Gastrocnemius medialis (tissue), 4 donors: ENCODE measurements at regions of chr4 and their contacts with region 1.

Region 1: DNA sequence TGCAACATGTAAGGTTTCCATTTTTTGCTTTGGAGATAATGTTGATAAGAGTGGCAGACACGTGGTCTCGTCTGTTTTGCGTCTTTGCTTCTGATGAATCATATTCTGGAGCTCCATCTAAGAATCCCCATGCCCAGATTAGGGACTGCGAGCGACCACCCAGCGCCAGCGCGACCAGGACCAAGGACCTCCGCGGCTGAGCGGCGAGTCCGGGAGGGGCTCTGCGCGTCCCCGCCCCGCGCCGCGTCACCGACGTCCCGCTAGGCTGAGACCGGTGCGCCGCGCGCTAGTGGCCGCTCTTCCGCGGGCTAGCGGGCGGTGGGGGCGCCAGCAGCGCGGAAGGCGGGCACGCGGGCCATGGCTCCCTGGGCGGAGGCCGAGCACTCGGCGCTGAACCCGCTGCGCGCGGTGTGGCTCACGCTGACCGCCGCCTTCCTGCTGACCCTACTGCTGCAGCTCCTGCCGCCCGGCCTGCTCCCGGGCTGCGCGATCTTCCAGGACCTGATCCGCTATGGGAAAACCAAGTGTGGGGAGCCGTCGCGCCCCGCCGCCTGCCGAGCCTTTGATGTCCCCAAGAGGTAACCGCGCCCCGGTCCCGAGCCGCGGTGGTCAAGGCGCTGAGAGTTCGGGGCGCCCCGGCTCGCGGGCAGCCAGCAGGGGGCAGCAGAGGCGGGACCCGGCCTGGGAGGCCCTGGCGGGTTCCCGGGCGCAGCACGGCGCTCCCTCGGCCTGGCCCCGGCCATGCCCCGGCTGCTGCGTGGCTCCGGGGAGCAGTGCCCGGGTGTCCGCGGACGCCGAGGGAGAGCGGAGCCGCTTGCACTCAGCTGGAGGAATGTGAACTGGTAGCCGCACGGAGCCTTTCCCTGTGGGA is at the start of gene SRD5A3:
- DNase-seq: peak; percentile 61 to 74
- ATAC-seq: peak; percentile 95 to 97
- H3K4me3 ChIP-seq: peak within 1 kb of the TSS; percentile 68 to 99 (median 82)
- H3K27ac ChIP-seq: peak within 1 kb of the TSS; percentile 89 to 99 (median 95)
- H3K4me1 ChIP-seq: peaks cover 0 to 20% of the 10 kb centered on the region in 2 donors
- H3K27me3 ChIP-seq: no peaks in the 10 kb centered on the region
- CTCF ChIP-seq: peak; percentile 88 to 99 (median 97)
- POLR2A ChIP-seq: peak; percentile 47 to 68
- total RNA-seq, gene SRD5A3: 2.4 to 7.6 (median 5.1) TPM

Region 2: DNA sequence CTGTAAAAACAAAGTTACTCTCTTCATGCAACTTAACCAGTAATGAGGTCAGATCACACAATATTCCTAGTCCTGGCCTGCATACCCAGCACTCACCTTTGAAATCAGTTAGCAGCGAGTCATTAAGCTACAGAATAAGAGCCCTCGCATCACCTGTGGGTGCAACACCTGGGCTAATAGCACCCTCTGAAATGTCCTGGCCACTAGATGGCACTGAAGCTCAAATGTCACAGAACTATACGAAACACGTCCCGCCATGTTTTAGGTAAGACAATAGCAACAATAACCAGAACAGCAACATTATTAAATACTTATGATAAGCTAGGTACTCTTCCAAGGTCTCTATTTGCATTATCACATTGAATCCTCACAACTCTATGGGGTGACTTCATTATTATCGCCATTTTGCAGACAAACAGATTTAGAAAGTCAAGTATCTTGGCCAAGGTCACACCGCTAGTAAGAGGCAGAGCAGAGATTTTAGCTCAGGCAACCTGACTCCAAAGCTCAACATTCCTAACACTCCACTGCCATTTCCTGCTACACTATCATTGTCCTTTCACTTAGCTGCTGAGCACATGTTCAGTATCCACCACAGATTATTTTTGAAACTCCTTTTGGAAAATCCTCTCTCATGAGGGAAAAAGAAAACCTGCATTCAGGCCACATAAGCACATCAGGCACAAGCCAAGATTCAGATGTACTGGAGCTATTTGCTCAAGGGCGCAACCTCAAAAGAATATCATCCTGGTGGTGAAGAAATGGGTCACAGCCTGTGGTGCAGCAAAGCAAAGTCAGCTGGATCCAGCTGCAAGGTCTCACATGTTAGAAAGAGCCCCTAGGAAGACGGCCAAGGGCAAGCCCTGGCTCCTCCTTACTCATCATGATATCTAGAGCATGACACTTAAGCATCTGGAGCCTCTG is 161.4 kb before region 1 on chr4:
- in situ Hi-C with region 1: no loop called
- intact Hi-C with region 1: no loop called
- DNase-seq: no peak
- ATAC-seq: no peak
- H3K4me3 ChIP-seq: no peak overlapping the region
- H3K27ac ChIP-seq: no peak overlapping the region
- H3K4me1 ChIP-seq: peaks cover 0 to 9% of the 10 kb centered on the region in 2 donors
- H3K27me3 ChIP-seq: no peaks in the 10 kb centered on the region
- CTCF ChIP-seq: no peak
- POLR2A ChIP-seq: no peak

Region 3: DNA sequence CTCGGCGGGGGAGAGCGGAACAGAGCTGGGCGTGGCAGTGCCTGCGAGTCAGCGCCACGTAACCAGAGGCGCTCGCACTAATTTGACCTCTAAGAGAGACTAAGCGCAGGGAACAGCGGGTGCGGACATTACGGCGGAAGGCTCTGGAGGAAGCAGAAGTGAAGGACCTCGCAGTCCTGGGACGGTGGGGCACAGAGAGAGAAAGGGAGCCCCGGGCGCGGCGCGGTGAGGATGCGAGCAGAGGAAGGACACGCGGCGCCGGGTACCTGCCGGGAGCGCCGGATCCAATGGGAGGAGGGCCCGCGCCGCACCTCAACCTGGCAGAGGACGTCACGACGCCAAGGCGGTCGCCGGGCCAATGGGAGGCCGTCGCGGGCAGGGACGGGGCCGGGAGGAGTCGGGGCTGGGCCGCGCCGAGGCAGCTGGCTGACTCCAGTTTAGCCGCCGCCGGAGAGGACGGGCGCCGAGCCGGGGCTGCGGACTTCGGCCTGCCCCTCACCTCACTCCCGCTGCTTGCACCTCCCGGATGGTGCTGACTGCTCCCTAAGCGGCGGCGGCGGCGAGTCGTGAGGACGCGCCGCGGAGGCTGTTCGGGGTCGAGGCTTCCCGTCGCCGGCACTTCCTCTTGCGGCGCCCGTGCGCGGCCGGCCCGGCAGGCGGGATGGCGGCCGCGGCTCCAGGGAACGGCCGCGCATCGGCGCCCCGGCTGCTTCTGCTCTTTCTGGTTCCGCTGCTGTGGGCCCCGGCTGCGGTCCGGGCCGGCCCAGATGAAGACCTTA is 49.5 kb after region 1 on chr4 and contains the start of gene TMEM165:
- in situ Hi-C with region 1: loop called in 1 of 4 experiments (anchors 10 kb)
- intact Hi-C with region 1: loop called (anchors 1 kb)
- DNase-seq: peak; percentile 88
- ATAC-seq: peak; percentile 89 to 90
- H3K4me3 ChIP-seq: peak within 1 kb of the TSS; percentile 72 to 95 (median 77)
- H3K27ac ChIP-seq: peak within 1 kb of the TSS; percentile 83 to 96 (median 91)
- H3K4me1 ChIP-seq: peaks cover 32 to 38% of the 10 kb centered on the region in 2 donors
- H3K27me3 ChIP-seq: no peaks in the 10 kb centered on the region
- CTCF ChIP-seq: peak in 1 of 5 experiments; percentile 15
- POLR2A ChIP-seq: peak; percentile 92 to 93
- total RNA-seq, gene TMEM165: 23.5 to 80.3 (median 48.9) TPM

Region 4: DNA sequence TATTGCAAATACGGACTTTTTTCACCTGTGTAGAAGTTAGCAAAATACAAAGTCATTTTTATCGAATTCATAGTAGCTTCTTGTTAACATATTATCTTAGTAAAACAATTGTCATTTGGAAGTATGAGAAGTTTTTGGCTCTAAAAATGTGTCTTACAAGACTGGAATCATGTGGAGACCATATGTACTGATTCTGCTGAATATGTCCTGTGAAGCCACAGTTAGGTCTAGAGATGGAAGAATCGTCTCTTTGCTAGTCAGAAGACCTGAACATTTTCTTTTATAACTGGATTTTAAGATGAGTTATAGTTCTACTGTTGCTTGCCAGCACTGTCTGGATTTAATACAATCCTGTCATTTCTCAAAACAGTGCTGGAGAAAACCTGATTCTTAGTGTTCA is 78.6 kb after region 1 on chr4:
- in situ Hi-C with region 1: no loop called
- intact Hi-C with region 1: loop called (anchors 5 kb)
- DNase-seq: no peak
- ATAC-seq: no peak
- H3K4me3 ChIP-seq: no peak overlapping the region
- H3K27ac ChIP-seq: no peak overlapping the region
- H3K4me1 ChIP-seq: no peaks in the 10 kb centered on the region
- H3K27me3 ChIP-seq: no peaks in the 10 kb centered on the region
- CTCF ChIP-seq: no peak
- POLR2A ChIP-seq: no peak

Region 5: GRCh38 chr4:55546756-55547465 is 200.7 kb after region 1 on chr4 and contains the start of gene CLOCK:
- in situ Hi-C with region 1: loop called in 1 of 4 experiments (anchors 10 kb)
- intact Hi-C with region 1: loop called (anchors 1 kb)
- DNase-seq: peak; percentile 75 to 82
- ATAC-seq: peak; percentile 86 to 87
- H3K4me3 ChIP-seq: peak within 1 kb of the TSS; percentile 81 to 97 (median 93)
- H3K27ac ChIP-seq: peak within 1 kb of the TSS; percentile 98 to 99 (median 98)
- H3K4me1 ChIP-seq: peaks cover 19 to 25% of the 10 kb centered on the region in 2 donors
- H3K27me3 ChIP-seq: no peaks in the 10 kb centered on the region
- CTCF ChIP-seq: peak; percentile 30 to 71 (median 67)
- POLR2A ChIP-seq: peak; percentile 72 to 76
- total RNA-seq, gene CLOCK: 21.9 to 60.7 (median 34.2) TPM

Region 6: DNA sequence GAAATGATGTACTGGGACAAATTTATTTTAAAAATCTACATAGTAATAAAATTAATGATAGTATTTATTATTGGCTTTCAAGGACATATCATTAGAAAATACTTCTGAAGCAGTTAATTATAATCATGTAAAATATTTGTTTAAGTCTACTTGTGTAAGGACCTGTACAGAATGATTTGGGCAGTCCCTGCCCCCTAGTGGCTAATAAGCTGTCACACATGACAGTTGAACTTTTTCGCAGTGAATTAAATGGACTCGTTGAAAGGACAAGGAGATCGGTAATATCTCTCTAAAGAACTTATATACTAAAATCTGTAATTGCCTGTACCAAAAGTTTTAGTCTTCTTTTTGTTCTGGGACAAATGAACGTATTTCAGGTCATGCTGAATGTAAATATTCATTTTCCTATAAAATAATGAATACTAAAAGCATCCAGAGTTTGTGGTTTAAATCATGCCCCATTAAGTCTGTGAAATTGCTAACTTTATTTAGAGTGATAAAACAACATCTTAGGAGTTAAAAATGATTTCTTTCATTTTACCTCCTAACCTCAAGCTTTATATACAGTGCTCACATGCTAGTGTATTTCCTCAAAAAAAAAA is 520.9 kb after region 1 on chr4:
- in situ Hi-C with region 1: loop called in 3 of 4 experiments (anchors 25 kb)
- intact Hi-C with region 1: loop called (anchors 1 kb)
- DNase-seq: peak in 1 of 2 donors; percentile 18
- ATAC-seq: peak; percentile 86 to 90
- H3K4me3 ChIP-seq: no peak overlapping the region
- H3K27ac ChIP-seq: peak overlapping the region in 2 of 4 donors; percentile 69
- H3K4me1 ChIP-seq: peaks cover 6 to 11% of the 10 kb centered on the region in 2 donors
- H3K27me3 ChIP-seq: no peaks in the 10 kb centered on the region
- CTCF ChIP-seq: peak; percentile 59 to 85 (median 69)
- POLR2A ChIP-seq: no peak